Sigmoid colon (tissue), 7 donors: ENCODE measurements at regions of chr4 and their contacts with region 1.

Region 1: GRCh38 chr4:4541661-4542570 is at the start of gene STX18:
- DNase-seq: peak; percentile 92
- H3K4me3 ChIP-seq: peak within 1 kb of the TSS; percentile 87 to 98 (median 92)
- H3K27ac ChIP-seq: peak within 1 kb of the TSS; percentile 81 to 91 (median 84)
- H3K4me1 ChIP-seq: peaks cover 0 to 41% (median 33%) of the 10 kb centered on the region in 4 donors
- H3K27me3 ChIP-seq: no peaks in the 10 kb centered on the region
- CTCF ChIP-seq: no peak
- EP300 ChIP-seq: peak in 1 of 4 donors; percentile 32
- POLR2A ChIP-seq: peak; percentile 31 to 64
- total RNA-seq, gene STX18: 23.5 to 26.9 (median 26.0) TPM

Region 2: DNA sequence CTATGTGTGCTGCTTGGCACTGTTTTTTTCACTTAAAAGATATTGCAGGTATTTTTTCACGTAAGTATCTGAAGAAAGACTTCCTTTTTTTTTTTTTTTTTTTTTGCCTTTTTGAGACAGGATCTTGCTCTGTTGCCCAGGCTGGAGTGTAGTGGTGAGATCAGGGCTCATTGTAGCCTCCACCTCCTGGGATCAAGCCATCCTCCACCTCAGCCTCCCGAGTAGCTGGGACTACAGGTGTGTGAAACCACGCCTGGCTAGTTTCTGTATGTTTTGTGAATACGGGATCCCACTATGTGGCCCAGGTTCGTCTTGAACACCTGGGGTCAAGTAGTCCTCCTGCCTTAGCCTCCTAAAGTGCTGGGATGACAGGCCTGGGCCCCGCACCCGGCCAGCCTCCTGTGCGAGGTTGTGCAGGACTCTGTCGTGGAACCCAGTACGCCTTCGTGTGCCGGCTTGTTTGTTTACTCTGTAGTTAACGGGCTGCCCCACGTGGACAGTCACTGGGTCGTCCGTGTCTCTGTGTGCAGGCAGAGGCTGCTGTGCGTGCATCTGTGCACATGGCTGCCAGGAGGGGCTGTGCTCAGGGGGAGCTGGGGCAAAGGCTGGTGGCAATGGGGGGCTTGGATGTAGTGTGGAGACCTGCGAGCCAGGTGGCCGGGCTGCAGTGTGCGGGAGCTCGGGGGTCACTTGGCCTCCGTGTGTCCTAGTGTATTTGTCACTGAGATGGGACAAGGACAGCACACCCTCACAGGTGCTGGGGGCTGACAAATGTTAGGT is 596.2 kb before region 1 on chr4:
- intact Hi-C with region 1: no loop called
- DNase-seq: no peak
- H3K4me3 ChIP-seq: no peak overlapping the region
- H3K27ac ChIP-seq: no peak overlapping the region
- H3K4me1 ChIP-seq: no peaks in the 10 kb centered on the region
- H3K27me3 ChIP-seq: peaks cover 0 to 7% (median 0%) of the 10 kb centered on the region in 3 donors
- CTCF ChIP-seq: no peak
- EP300 ChIP-seq: no peak
- POLR2A ChIP-seq: no peak

Region 3: GRCh38 chr4:4248029-4248884 is 293.7 kb before region 1 on chr4 and contains the start of gene TMEM128:
- intact Hi-C with region 1: loop called (anchors 2 kb)
- DNase-seq: peak; percentile 96
- H3K4me3 ChIP-seq: peak within 1 kb of the TSS; percentile 58 to 86 (median 73)
- H3K27ac ChIP-seq: peak within 1 kb of the TSS; percentile 90 to 92 (median 92)
- H3K4me1 ChIP-seq: peaks cover 0 to 26% (median 24%) of the 10 kb centered on the region in 4 donors
- H3K27me3 ChIP-seq: no peaks in the 10 kb centered on the region
- CTCF ChIP-seq: peak in 2 of 4 experiments; percentile 29 to 33
- EP300 ChIP-seq: peak in 1 of 4 donors; percentile 29
- POLR2A ChIP-seq: peak; percentile 71
- total RNA-seq, gene TMEM128: 11.1 to 23.5 (median 22.6) TPM

Region 4: GRCh38 chr4:4488405-4489404 is 53.2 kb before region 1 on chr4:
- intact Hi-C with region 1: loop called (anchors 5 kb)
- DNase-seq: peak; percentile 74
- H3K4me3 ChIP-seq: no peak overlapping the region
- H3K27ac ChIP-seq: no peak overlapping the region
- H3K4me1 ChIP-seq: peaks cover 0 to 9% (median 2%) of the 10 kb centered on the region in 4 donors
- H3K27me3 ChIP-seq: no peaks in the 10 kb centered on the region
- CTCF ChIP-seq: peak; percentile 55 to 87 (median 76)
- EP300 ChIP-seq: no peak
- POLR2A ChIP-seq: no peak

Region 5: GRCh38 chr4:4575273-4576211 is 33.6 kb after region 1 on chr4:
- intact Hi-C with region 1: loop called (anchors 2 kb)
- DNase-seq: peak; percentile 66
- H3K4me3 ChIP-seq: peak overlapping the region; percentile 52 to 82 (median 62)
- H3K27ac ChIP-seq: peak overlapping the region; percentile 43 to 70 (median 54)
- H3K4me1 ChIP-seq: peaks cover 0 to 13% (median 0%) of the 10 kb centered on the region in 4 donors
- H3K27me3 ChIP-seq: no peaks in the 10 kb centered on the region
- CTCF ChIP-seq: peak; percentile 4 to 73 (median 17)
- EP300 ChIP-seq: no peak
- POLR2A ChIP-seq: no peak